Activated CD4-positive, alpha-beta memory T cell treated with anti-CD3 and anti-CD28 coated beads for 36 hours (primary cell): ENCODE measurements at regions of chr1 and their contacts with region 1.

Region 1: GRCh38 chr1:207077470-207078377 is 10.9 kb upstream of the C4BPB start:
- DNase-seq: peak; percentile 70
- H3K4me3 Mint-ChIP-seq: no peak overlapping the region
- H3K27ac Mint-ChIP-seq: no peak overlapping the region
- H3K4me1 Mint-ChIP-seq: peaks cover 2% of the 10 kb centered on the region
- H3K27me3 Mint-ChIP-seq: peaks cover 16% of the 10 kb centered on the region

Region 2: DNA sequence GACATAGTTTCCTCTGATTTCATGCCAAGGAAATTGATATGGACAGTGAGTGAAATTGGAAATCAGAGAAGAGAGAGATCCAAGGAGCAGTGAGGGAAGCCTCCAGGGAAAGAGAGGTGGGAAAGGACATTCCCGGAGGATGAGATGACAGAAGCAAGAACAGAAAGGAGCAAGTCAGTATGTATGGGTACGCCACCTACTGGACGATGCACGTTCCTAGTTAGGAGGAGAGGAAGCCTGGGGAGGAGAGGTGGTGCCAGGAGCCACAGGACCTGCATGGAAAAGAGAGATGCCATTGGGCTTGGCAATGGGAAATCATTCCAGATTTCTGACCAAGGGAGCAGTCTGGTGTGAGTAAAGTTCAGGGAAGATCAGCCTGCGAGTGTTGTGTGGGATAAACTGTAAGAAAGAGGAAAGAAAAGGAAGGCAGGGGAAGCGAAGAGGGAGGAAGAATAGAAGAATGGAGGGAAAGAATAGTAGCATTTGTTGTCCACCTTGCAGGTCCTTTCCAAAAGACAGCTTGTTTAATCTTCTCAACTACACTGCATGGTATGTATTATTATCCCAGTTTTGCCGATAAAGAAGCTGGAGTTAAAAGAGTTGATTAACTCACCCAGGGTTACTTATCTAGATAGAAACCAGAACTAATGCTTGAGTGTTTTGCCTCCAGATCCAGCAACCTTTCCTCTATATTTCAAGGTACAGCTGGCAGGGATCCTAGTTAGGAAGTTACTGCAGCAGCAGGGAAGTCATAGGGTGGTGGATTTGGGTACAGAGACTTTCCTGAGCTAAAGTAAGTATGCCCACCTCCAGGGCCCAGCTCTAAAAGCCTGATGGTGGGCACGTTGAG is 72.5 kb before region 1 on chr1:
- CTCF ChIA-PET with region 1: interaction called, 7 read pairs
- POLR2A ChIA-PET with region 1: no interaction called
- intact Hi-C with region 1: loop called (anchors 2 kb)
- DNase-seq: peak; percentile 51
- H3K4me3 Mint-ChIP-seq: no peak overlapping the region
- H3K27ac Mint-ChIP-seq: no peak overlapping the region
- H3K4me1 Mint-ChIP-seq: peaks cover 2% of the 10 kb centered on the region
- H3K27me3 Mint-ChIP-seq: peaks cover 7% of the 10 kb centered on the region

Region 3: GRCh38 chr1:207052911-207053769 is 24.6 kb before region 1 on chr1 and contains the start of gene PFKFB2:
- CTCF ChIA-PET with region 1: interaction called, 24 read pairs
- POLR2A ChIA-PET with region 1: no interaction called
- intact Hi-C with region 1: loop called (anchors 1 kb)
- DNase-seq: peak; percentile 95
- H3K4me3 Mint-ChIP-seq: peak within 1 kb of the TSS; percentile 93
- H3K27ac Mint-ChIP-seq: peak within 1 kb of the TSS; percentile 67
- H3K4me1 Mint-ChIP-seq: peaks cover 33% of the 10 kb centered on the region
- H3K27me3 Mint-ChIP-seq: no peaks in the 10 kb centered on the region
- total RNA-seq, gene PFKFB2: 2.1 to 2.5 TPM